Right ventricle myocardium superior (tissue), 1 donor: ENCODE measurements at regions of chr11 and their contacts with region 1.

Region 1: DNA sequence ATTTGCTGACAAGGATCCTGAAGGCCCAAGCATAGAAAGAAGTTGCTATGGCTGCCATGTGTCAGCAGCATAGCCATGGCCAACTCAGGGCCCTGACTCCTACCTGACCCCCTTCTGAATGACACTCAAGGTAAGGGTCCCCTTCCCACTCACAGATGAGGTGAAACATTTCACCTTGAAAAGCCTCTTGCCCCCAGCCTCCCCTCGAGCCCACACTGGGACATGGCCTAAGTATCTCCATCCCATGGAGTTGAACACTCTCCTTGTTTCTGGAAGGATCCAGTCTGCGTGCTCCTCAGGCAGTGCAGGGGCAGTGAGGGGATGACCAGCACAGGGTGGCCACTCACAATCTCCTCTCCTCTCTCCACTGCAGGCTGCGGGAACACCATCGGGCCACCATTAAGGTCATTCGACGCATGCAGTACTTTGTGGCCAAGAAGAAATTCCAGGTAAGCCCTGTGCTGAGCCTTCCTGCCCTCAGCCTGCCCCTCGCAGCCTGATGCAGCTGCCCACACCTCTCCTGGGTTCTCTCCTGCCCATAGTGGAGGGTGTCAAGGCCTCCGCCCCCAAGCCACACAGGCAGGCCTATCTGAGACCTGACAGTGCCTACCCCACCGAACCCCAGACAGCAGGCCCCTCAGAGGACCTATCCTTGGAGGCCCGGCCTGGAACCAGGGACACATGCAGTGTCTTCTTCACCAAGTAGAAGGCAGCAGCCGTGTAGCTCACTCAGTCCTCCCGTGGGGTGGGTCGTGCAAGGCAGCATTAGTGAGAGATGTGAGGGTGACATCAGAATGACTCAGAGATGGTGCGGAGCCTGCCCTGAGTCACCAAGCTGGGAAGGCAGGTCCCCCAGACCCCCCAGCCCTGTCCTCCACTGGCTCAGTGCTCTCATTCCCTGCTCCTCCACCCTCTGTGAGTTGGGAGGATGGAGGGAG is 68.9 kb upstream of the KCNQ1OT1 start:
- DNase-seq: peak; percentile 33
- ATAC-seq: no peak

Region 2: DNA sequence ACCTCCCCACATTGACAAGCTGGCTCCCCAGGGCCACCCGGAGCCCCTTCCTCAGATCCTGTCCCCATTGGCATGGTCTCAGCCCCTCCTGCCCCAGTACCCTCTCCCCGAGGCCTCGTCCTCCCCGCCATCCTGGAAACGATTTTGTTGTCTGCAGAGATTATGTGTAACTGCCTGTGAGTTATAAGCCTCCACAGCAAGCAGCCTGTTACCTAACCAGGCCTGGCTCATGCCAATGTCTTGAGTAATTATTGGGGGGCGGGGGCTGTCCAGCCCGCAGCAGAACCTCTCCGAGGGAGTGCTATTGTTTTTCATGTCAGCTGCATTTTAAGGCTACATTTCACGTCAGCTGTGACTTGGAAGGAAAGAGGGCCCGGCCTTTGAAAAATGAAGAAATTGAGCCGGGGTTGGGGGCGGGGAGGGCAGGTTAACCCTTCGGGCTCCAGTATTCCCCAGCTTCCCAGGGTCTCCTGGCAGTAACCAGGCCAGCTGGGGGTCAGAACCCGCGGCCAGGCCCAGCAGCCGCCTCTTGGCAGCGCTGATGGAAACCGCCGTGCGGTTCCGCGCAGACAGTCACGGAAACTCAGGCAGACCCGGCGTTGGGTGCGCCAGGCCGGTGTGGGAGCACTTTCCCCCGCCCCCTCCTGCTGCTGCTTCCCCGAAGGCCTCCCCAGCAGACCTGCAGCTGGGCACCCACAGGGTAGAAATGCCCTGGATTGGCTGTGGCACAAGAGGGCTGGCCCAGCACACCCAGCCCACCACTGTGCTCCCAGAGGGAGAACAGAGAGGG is 57.3 kb after region 1 on chr11:
- intact Hi-C with region 1: loop called (anchors 10 kb)
- DNase-seq: peak; percentile 78
- ATAC-seq: peak; percentile 84

Region 3: GRCh38 chr11:2850371-2850770 is 81.6 kb after region 1 on chr11:
- intact Hi-C with region 1: no loop called
- DNase-seq: no peak
- ATAC-seq: no peak